Activated B cell treated with CpG ODN at 0.5 μM for 24 hours (primary cell): ENCODE measurements at regions of chr9 and their contacts with region 1.

Region 1: GRCh38 chr9:113436728-113437471 is 26.4 kb downstream of the C9orf43 start:
- DNase-seq: no peak
- ATAC-seq: no peak
- H3K4me3 Mint-ChIP-seq: no peak overlapping the region
- H3K27ac Mint-ChIP-seq: no peak overlapping the region
- H3K4me1 Mint-ChIP-seq: no peaks in the 10 kb centered on the region
- H3K27me3 Mint-ChIP-seq: peaks cover 5% of the 10 kb centered on the region
- CTCF ChIP-seq: no peak

Region 2: DNA sequence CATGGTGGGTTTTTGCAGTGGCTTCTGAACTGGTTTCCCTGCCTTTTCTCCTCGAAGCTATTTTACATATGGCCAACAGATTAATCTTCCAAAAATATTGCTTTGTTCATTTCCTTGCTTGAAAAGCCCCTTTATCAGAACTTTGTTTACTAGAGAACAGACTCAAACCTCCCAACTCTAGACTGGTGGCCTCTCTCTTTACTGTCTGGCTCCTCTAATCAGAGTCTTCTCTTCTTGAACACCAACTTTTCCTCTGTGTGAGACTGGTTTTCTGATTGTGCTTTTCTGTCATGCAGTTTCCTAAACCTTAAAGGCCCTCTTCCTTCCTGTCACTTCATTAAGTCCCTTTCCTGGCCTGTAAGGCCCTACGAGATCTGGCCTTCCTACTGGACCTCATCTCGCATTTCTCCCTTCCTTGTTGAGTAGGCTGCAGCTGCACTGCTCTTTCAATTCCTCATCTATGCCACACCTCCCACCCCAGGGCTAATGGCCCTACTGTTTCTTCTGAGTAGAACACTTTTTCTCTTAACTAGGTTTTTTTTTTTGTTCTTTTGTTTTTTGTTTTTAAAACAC is 20.7 kb before region 1 on chr9:
- CTCF ChIA-PET with region 1: no interaction called
- POLR2A ChIA-PET with region 1: no interaction called
- intact Hi-C with region 1: loop called (anchors 2 kb)
- DNase-seq: no peak
- ATAC-seq: peak; percentile 99
- H3K4me3 Mint-ChIP-seq: no peak overlapping the region
- H3K27ac Mint-ChIP-seq: no peak overlapping the region
- H3K4me1 Mint-ChIP-seq: peaks cover 4% of the 10 kb centered on the region
- H3K27me3 Mint-ChIP-seq: no peaks in the 10 kb centered on the region
- CTCF ChIP-seq: no peak

Region 3: DNA sequence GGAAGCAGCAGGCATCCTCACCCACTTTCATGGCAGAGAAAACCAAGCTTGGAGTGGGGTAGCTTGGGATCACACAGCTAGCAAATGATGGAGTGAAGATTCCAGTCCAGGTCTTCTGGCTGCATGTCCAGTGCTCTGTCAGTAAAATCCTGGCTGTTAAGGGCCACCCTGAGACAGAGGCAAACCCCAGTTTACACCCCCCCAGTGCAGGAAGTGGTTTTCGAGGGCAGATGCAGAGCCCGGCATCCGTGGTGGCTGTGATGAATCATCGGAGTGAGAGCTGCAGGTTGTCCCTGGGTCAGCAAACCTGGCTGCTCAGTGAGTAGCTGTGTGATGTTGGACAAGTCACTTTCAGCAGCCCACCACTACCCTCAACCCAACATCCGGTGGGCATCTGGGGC is 142.0 kb after region 1 on chr9:
- CTCF ChIA-PET with region 1: no interaction called
- POLR2A ChIA-PET with region 1: no interaction called
- intact Hi-C with region 1: no loop called
- DNase-seq: peak; percentile 68
- ATAC-seq: peak; percentile 48
- H3K4me3 Mint-ChIP-seq: peak overlapping the region; percentile 53
- H3K27ac Mint-ChIP-seq: peak overlapping the region; percentile 94
- H3K4me1 Mint-ChIP-seq: peaks cover 79% of the 10 kb centered on the region
- H3K27me3 Mint-ChIP-seq: no peaks in the 10 kb centered on the region
- CTCF ChIP-seq: no peak

Region 4: GRCh38 chr9:113632776-113633590 is 196.1 kb after region 1 on chr9:
- CTCF ChIA-PET with region 1: no interaction called
- POLR2A ChIA-PET with region 1: no interaction called
- intact Hi-C with region 1: no loop called
- DNase-seq: no peak
- ATAC-seq: no peak
- H3K4me3 Mint-ChIP-seq: no peak overlapping the region
- H3K27ac Mint-ChIP-seq: no peak overlapping the region
- H3K4me1 Mint-ChIP-seq: no peaks in the 10 kb centered on the region
- H3K27me3 Mint-ChIP-seq: peaks cover 17% of the 10 kb centered on the region
- CTCF ChIP-seq: no peak